ENCODE measurements at regions of chr6 and their contacts with region 1.

Region 1: DNA sequence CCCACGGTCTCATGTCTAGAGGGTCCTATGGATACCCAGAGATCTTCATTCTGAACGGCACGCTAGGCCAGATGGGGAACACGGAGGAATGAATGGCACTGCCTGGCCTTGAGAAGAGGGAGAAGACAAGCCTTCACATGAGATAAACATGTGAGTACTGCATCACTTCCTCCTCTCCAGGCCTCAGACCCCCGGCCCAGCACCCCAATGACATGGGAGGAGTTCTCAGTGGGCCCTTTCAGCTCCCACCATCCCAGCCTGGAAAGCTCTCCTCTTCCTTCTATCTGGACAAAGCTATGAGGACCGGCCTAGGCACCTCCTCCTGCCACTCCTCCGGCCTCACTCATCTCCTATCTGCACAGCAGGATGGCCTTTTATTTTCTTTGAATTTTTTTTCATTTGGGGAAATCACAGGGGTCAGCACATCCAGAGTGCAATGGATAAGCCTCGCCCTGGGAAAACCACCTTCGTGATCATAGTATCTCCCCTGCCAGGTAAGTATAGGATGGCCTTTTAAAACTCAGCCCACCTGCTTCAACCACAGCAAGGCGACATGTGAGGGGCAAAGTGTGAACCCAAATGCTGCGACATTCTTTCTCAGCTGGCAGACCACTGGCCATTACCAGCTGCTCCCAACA is 39.2 kb upstream of the CDKN1A start:
- DNase-seq: no peak
- ATAC-seq: no peak
- H3K4me3 ChIP-seq: no peak overlapping the region
- H3K27ac ChIP-seq: no peak overlapping the region
- H3K4me1 ChIP-seq: peaks cover 2 to 24% (median 14%) of the 10 kb centered on the region in 9 donors
- H3K27me3 ChIP-seq: no peaks in the 10 kb centered on the region
- CTCF ChIP-seq: no peak

Region 2: GRCh38 chr6:36671687-36672380 is 32.5 kb after region 1 on chr6:
- intact Hi-C with region 1: loop called in 2 of 10 experiments (anchors 5 kb)
- DNase-seq: no peak
- ATAC-seq: no peak
- H3K4me3 ChIP-seq: no peak overlapping the region
- H3K27ac ChIP-seq: no peak overlapping the region
- H3K4me1 ChIP-seq: peaks cover 0 to 27% (median 13%) of the 10 kb centered on the region in 9 donors
- H3K27me3 ChIP-seq: no peaks in the 10 kb centered on the region
- CTCF ChIP-seq: no peak

Region 3: GRCh38 chr6:37077905-37078296 is 438.6 kb after region 1 on chr6:
- intact Hi-C with region 1: no loop called
- DNase-seq: peak; percentile 70 to 86
- ATAC-seq: peak; percentile 84 to 93 (median 90)
- H3K4me3 ChIP-seq: no peak overlapping the region
- H3K27ac ChIP-seq: peak overlapping the region in 6 of 10 donors; percentile 9 to 49 (median 20)
- H3K4me1 ChIP-seq: peaks cover under 1 to 32% (median 8%) of the 10 kb centered on the region in 9 donors
- H3K27me3 ChIP-seq: no peaks in the 10 kb centered on the region
- CTCF ChIP-seq: no peak